Mammary epithelial cell (primary cell): ENCODE measurements at regions of chr18 and their contacts with region 1.

Region 1: DNA sequence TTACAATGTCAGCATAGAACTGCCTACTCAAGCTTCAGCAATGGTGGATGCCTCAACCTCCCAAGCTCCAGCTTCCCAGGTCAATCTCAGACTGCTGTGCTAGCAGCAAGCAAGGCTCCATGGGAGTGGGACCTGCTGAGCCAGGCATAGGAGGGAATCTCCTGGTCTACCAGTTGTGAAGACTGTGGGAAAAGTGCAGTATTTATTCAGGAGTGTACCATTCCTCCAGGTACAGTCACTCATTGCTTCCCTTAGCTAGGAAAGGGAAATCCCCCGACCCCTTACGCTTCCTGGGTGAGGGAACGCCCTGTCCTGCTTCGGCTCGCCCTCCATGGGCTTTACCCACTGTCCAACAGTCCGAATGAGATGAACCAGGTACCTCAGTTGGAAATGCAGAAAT is 130.3 kb downstream of the ADCYAP1 start:
- DNase-seq: no peak
- H3K4me3 ChIP-seq: no peak overlapping the region
- H3K27ac ChIP-seq: no peak overlapping the region
- H3K4me1 ChIP-seq: no peaks in the 10 kb centered on the region
- H3K27me3 ChIP-seq: no peaks in the 10 kb centered on the region
- CTCF ChIP-seq: no peak

Region 2: GRCh38 chr18:984004-984403 is 51.0 kb before region 1 on chr18:
- CTCF ChIA-PET with region 1: no interaction called
- dilution Hi-C with region 1: loop called (anchors 5 kb)
- in situ Hi-C with region 1: no loop called
- intact Hi-C with region 1: no loop called
- DNase-seq: no peak
- H3K4me3 ChIP-seq: no peak overlapping the region
- H3K27ac ChIP-seq: no peak overlapping the region
- H3K4me1 ChIP-seq: no peaks in the 10 kb centered on the region
- H3K27me3 ChIP-seq: no peaks in the 10 kb centered on the region
- CTCF ChIP-seq: no peak